Prostate gland (tissue), 2 donors: ENCODE measurements at regions of chr12 and their contacts with region 1.

Region 1: DNA sequence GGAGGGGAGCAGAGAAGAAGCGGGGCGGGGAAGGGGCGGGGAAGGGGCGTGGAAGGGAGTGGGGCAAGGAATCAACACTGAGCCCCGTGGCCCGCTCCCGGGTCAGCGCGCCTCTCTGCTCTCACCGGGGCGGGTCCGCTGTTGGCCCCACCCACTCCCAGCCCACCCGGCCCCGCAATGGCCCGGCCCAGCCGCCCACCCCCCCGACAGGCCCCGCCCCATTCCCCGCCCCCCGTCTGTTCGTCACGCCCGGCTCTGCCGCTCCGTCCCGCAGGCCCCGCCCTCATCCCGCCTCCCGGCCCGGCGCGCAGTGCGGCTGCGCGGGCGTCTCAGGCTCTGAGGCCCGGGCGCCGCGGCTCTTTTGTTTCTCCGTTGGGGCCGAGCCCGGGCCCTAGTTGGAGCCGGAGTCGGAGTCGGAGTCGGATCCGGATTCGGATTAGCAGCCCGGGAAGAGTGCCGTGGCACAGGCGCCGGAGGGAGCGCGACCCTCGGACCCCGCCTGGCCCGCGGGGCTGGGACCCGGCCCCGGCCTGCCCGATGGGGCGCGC is at the start of gene ULK1:
- DNase-seq: peak; percentile 89
- H3K4me3 ChIP-seq: peak within 1 kb of the TSS; percentile 62 to 78
- H3K27ac ChIP-seq: peak within 1 kb of the TSS; percentile 99 to 100
- H3K4me1 ChIP-seq: no peaks in the 10 kb centered on the region
- H3K27me3 ChIP-seq: no peaks in the 10 kb centered on the region
- CTCF ChIP-seq: no peak
- POLR2A ChIP-seq: peak; percentile 97
- total RNA-seq, gene ULK1: 26.2 to 62.5 TPM

Region 2: GRCh38 chr12:131928711-131929580 is 34.6 kb after region 1 on chr12 and contains the start of gene PUS1:
- intact Hi-C with region 1: loop called (anchors 1 kb)
- DNase-seq: peak; percentile 92
- H3K4me3 ChIP-seq: peak within 1 kb of the TSS; percentile 58 to 64
- H3K27ac ChIP-seq: peak within 1 kb of the TSS; percentile 80
- H3K4me1 ChIP-seq: no peaks in the 10 kb centered on the region
- H3K27me3 ChIP-seq: no peaks in the 10 kb centered on the region
- CTCF ChIP-seq: peak in 1 of 4 experiments; percentile 13
- POLR2A ChIP-seq: peak; percentile 68
- total RNA-seq, gene PUS1: 17.4 to 17.8 TPM